K562 (cell line): ENCODE measurements at regions of chr3 and their contacts with region 1.

Region 1: DNA sequence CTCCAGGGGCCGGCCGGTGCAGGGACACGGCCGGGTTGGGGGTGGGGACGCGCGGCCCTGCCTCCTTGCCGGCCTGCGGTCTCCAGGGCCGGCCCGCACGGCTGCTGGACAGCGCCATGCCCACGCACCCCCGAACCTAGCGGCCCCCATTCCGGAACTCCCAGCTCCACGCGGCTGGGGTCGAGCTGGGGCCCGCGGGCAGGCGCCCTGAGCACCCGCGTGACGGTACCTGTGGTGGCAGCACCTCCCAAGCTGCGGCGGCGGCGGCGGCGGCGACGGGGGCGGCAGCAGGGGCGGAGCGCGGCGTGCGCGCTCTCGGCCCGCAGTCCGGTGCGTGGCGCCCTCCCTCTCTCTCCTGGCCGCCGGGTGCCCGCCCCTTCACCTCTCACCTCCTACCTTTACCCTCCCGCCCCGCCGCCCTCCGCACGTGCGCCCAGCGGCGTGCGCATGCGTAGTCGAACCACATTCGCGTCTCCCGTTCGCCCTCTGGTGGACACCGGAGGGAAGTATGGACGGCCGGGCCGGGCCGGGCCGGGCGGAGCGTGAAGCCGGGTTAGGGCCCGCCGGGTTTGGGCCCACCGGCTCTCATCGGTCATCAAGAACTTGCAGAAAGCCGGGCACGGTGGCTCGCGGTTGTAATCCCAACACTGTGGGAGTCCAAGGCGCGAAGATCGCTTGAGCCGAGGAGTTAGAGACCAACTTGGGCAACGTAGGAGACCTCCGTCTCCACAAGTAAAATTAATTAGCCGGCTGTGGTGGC is at the start of gene SCAP:
- DNase-seq: peak; percentile 95 to 98 (median 96)
- ATAC-seq: peak; percentile 82
- H3K4me3 ChIP-seq: peak within 1 kb of the TSS; percentile 91
- H3K27ac ChIP-seq: peak within 1 kb of the TSS; percentile 86
- H3K4me1 ChIP-seq: peaks cover 29 to 50% of the 10 kb centered on the region in 2 experiments
- H3K27me3 ChIP-seq: no peaks in the 10 kb centered on the region
- CTCF ChIP-seq: peak; percentile 91 to 93 (median 92)
- EP300 ChIP-seq: no peak; the same call in 1 of the 2 replicates
- POLR2A ChIP-seq: peak; percentile 85
- RAD21 ChIP-seq: peak; percentile 70 to 71
- polyA plus RNA-seq, gene SCAP: 2.6 to 3.2 TPM

Region 2: DNA sequence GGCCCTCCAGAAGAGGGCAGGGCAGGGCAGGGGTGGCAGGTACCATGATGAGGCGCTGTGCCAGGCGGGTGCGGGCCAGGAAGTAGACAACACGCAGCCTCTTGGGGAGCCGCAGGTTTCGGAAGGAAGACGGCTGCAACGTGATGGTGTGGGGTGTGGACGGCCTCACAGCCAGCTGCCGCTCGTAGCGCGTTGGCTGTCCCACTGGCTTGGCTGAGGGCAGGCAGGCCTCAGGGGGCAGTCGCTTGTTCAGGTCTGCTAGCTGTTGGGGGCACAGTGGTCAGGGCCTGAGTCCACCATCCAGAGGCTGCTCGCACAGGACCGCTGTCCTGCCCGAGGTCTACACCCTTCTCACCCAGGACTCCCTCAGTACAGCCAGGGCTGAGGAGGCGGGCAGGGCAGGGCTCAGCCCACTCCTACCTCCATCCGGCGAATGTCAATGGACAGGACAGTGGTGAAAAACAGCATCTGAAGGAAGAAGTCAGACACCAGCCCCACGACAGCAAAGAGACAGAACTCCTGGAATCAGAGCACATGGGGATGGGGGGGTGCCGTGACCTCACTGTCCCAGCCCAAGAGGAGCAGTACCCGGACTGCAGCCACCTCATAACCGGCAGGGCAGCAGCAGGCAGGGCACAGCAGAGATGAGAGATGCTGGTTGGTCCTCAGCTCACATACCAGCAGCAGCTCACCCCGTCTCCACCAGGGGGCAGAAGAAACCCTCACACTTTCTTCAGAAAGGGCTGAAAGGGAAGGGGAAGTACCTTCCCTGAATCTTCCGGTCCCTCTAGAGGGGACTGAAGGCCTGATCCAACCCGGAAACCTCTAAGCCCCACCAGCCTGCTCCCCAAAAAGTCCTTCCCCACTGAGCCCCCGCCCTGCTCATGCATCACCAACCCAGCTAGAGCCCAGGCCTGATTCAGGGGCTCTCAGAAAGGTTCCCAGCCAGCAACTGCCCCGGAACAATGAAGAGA is 55.0 kb before region 1 on chr3:
- CTCF ChIA-PET with region 1: interaction called, 5 read pairs
- POLR2A ChIA-PET with region 1: interaction called, 3 read pairs
- in situ Hi-C with region 1: no loop called
- intact Hi-C with region 1: loop called (anchors 1 kb)
- DNase-seq: peak; percentile 90 to 95 (median 91)
- ATAC-seq: peak; percentile 95
- H3K4me3 ChIP-seq: no peak overlapping the region
- H3K27ac ChIP-seq: peak overlapping the region; percentile 61
- H3K4me1 ChIP-seq: peaks cover 6 to 50% of the 10 kb centered on the region in 2 experiments; a peak in 3 of 5 replicates
- H3K27me3 ChIP-seq: no peaks in the 10 kb centered on the region
- CTCF ChIP-seq: peak; percentile 95 to 98 (median 97)
- EP300 ChIP-seq: 0 out of 2 replicates have a peak, but pooled peaks have one; percentile 33
- POLR2A ChIP-seq: 0 out of 2 replicates have a peak, but pooled peaks have one; percentile 34
- RAD21 ChIP-seq: peak; percentile 93 to 95

Region 3: GRCh38 chr3:47440131-47440530 is 35.6 kb before region 1 on chr3:
- CTCF ChIA-PET with region 1: no interaction called
- POLR2A ChIA-PET with region 1: interaction called, 3 read pairs
- in situ Hi-C with region 1: no loop called
- intact Hi-C with region 1: loop called (anchors 1 kb)
- DNase-seq: peak in 2 of 4 experiments; percentile 31 to 33
- ATAC-seq: peak; percentile 83
- H3K4me3 ChIP-seq: no peak overlapping the region
- H3K27ac ChIP-seq: no peak overlapping the region
- H3K4me1 ChIP-seq: no peaks in the 10 kb centered on the region; a peak in 1 of 5 replicates
- H3K27me3 ChIP-seq: no peaks in the 10 kb centered on the region
- CTCF ChIP-seq: peak; percentile 54 to 66 (median 60)
- EP300 ChIP-seq: no peak
- POLR2A ChIP-seq: no peak
- RAD21 ChIP-seq: peak in 1 of 2 experiments; percentile 61; a peak in 2 of 4 replicates

Region 4: DNA sequence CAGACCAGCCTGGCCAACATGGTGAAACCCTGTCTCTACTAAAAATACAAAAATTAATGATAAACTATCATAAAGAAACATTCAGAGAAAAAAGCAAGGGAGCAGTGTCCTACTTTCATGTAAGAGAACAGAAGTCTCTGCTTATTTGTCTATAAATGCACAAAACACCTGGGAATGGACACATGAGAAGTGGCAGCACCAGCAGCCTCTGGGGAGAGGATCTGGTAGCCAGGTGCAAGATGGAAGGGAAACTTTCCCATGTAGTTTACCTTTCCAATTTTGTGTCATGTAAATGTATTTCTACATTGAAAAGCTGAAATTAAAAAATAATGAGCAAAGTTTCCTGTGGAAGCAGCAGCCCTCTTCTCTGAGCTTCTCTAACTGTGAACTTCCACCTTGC is 18.8 kb before region 1 on chr3:
- CTCF ChIA-PET with region 1: no interaction called
- POLR2A ChIA-PET with region 1: interaction called, 12 read pairs
- in situ Hi-C with region 1: no loop called
- intact Hi-C with region 1: no loop called
- DNase-seq: no peak
- ATAC-seq: no peak
- H3K4me3 ChIP-seq: no peak overlapping the region
- H3K27ac ChIP-seq: no peak overlapping the region
- H3K4me1 ChIP-seq: peaks cover 0 to 4% of the 10 kb centered on the region in 2 experiments; a peak in 2 of 5 replicates
- H3K27me3 ChIP-seq: no peaks in the 10 kb centered on the region
- CTCF ChIP-seq: no peak
- EP300 ChIP-seq: no peak
- POLR2A ChIP-seq: no peak
- RAD21 ChIP-seq: no peak

Region 5: DNA sequence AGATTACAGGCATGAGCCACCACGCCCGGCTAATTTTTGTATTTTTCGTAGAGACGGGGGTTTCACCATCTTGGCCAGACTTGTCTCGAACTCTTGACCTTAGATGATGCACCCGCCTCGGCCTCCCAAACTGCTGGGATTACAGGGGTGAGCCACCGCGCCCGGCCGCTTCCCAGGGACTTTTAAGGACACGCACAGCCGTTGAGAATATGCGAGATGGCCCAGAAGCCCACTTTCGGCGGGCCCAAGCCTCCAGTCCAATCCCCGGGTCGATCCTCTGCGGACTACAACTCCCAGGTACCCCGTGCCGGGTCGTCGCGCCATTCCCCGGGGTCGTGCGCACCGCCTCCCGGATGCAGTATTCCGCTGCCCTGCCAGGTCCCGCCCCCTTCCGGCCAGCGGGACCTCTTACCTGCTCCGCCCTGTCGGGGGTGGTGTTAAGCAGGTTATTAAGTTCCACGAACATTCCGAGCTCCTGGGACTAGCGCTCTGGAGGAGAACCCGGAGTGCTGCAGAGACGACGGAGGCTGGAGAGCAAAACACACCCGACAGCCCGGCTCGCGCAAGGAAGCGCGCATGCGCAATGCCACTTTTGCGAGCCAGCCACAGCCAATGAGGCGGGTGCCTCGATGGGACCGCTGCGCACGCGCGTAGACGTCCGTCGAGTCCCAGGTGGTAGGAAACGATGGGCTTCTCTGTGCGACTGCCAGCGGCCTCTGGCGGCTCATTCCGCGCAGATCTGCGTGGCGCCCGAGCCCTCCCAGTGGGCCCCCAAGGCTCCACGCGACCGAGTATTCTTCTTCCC is 37.6 kb after region 1 on chr3 and contains the start of gene ELP6:
- CTCF ChIA-PET with region 1: interaction called, 3 read pairs
- POLR2A ChIA-PET with region 1: interaction called, 8 read pairs
- in situ Hi-C with region 1: no loop called
- intact Hi-C with region 1: loop called (anchors 1 kb)
- DNase-seq: peak; percentile 97 to 99 (median 98)
- ATAC-seq: peak; percentile 97
- H3K4me3 ChIP-seq: peak within 1 kb of the TSS; percentile 58
- H3K27ac ChIP-seq: peak within 1 kb of the TSS; percentile 95
- H3K4me1 ChIP-seq: peaks cover 30 to 37% of the 10 kb centered on the region in 2 experiments
- H3K27me3 ChIP-seq: no peaks in the 10 kb centered on the region
- CTCF ChIP-seq: peak; percentile 83 to 95 (median 92)
- EP300 ChIP-seq: peak; percentile 40
- POLR2A ChIP-seq: peak; percentile 97
- RAD21 ChIP-seq: peak; percentile 83 to 94
- polyA plus RNA-seq, gene ELP6: 86.1 to 136 TPM

Region 6: GRCh38 chr3:47705391-47705790 is 229.6 kb after region 1 on chr3:
- CTCF ChIA-PET with region 1: no interaction called
- POLR2A ChIA-PET with region 1: no interaction called
- in situ Hi-C with region 1: no loop called
- intact Hi-C with region 1: no loop called
- DNase-seq: no peak
- ATAC-seq: no peak
- H3K4me3 ChIP-seq: no peak overlapping the region
- H3K27ac ChIP-seq: no peak overlapping the region
- H3K4me1 ChIP-seq: no peaks in the 10 kb centered on the region
- H3K27me3 ChIP-seq: no peaks in the 10 kb centered on the region
- CTCF ChIP-seq: no peak
- EP300 ChIP-seq: no peak
- POLR2A ChIP-seq: no peak
- RAD21 ChIP-seq: no peak